ENCODE measurements at regions of chr17 and their contacts with region 1.

Region 1: GRCh38 chr17:75109407-75110233 is at the start of gene ARMC7:
- H3K4me3 ChIP-seq: peak within 1 kb of the TSS; percentile 75
- H3K27ac ChIP-seq: peak within 1 kb of the TSS; percentile 67; the same call in 1 of the 2 replicates
- H3K4me1 ChIP-seq: peaks cover 17% of the 10 kb centered on the region
- CTCF ChIP-seq: peak; percentile 10; the same call in 1 of the 2 replicates

Region 2: GRCh38 chr17:74917430-74917829 is 192.2 kb before region 1 on chr17:
- CTCF ChIA-PET with region 1: no interaction called
- POLR2A ChIA-PET with region 1: no interaction called
- H3K4me3 ChIP-seq: no peak overlapping the region
- H3K27ac ChIP-seq: no peak overlapping the region
- H3K4me1 ChIP-seq: no peaks in the 10 kb centered on the region
- CTCF ChIP-seq: no peak

Region 3: GRCh38 chr17:74961657-74962490 is 147.7 kb before region 1 on chr17:
- CTCF ChIA-PET with region 1: interaction called, 24 read pairs
- POLR2A ChIA-PET with region 1: interaction called, 3 read pairs
- H3K4me3 ChIP-seq: no peak overlapping the region
- H3K27ac ChIP-seq: no peak overlapping the region
- H3K4me1 ChIP-seq: no peaks in the 10 kb centered on the region
- CTCF ChIP-seq: peak; percentile 63

Region 4: GRCh38 chr17:75046582-75047289 is 62.9 kb before region 1 on chr17 and contains the starts of genes ATP5PD and KCTD2:
- CTCF ChIA-PET with region 1: interaction called, 15 read pairs
- POLR2A ChIA-PET with region 1: interaction called, 5 read pairs
- H3K4me3 ChIP-seq: peak within 1 kb of the TSS; percentile 99
- H3K27ac ChIP-seq: peak within 1 kb of the TSS; percentile 92
- H3K4me1 ChIP-seq: peaks cover 8% of the 10 kb centered on the region; the same call in 1 of the 2 replicates
- CTCF ChIP-seq: 0 out of 2 replicates have a peak, but pooled peaks have one; percentile 45

Region 5: GRCh38 chr17:75096082-75096625 is 13.5 kb before region 1 on chr17:
- CTCF ChIA-PET with region 1: interaction called, 61 read pairs
- POLR2A ChIA-PET with region 1: interaction called, 19 read pairs
- H3K4me3 ChIP-seq: no peak overlapping the region
- H3K27ac ChIP-seq: no peak overlapping the region
- H3K4me1 ChIP-seq: peaks cover under 1% of the 10 kb centered on the region; the same call in 1 of the 2 replicates
- CTCF ChIP-seq: no peak

Region 6: DNA sequence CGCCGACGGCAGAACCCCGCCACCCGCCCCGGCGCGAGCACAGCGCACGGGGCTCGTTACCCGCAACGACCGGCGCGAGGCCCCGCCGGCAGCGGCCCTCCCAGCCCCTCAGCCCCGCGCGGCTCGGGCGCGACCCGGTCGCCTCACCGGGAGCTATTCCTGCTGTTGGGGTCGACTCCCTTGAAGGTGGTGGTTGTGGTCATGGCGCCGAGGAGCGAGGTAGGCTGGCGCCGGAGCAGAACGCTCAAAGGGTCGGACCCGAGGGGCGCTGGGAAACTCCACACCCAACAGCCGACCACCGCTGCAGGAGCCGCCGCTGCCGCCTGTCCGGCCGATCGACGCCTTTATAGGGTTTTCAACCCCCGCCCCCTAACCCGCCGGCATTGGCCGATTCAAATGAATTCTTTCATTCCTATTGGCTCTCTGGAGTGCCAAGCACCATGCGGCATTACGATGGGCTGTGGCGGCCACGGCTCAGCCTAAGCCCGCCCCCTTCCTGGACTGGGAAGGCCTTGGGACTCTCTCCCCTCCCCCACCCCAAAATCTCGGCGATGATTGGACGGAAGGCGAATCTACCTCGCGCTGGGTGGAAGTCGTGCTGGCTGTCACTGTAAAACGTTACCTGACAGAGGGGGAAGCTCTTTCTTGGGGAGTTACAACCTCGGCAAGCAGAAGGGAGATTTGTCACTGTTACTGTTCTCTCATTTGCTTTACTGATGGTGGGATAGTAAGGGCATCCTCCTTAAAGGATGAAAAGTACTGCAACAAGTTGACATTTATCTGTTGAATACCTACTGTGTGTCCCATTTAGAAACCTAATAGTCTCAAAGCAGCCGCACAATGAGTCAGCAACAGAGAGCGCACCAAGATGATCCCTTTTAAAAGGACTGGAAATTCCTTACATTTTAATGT is 44.8 kb after region 1 on chr17 and contains the start of gene JPT1:
- CTCF ChIA-PET with region 1: interaction called, 11 read pairs
- POLR2A ChIA-PET with region 1: interaction called, 7 read pairs
- H3K4me3 ChIP-seq: peak within 1 kb of the TSS; percentile 90
- H3K27ac ChIP-seq: peak within 1 kb of the TSS; percentile 92
- H3K4me1 ChIP-seq: peaks cover 9% of the 10 kb centered on the region; the same call in 1 of the 2 replicates
- CTCF ChIP-seq: peak; percentile 11; the same call in 1 of the 2 replicates

Region 7: GRCh38 chr17:75205037-75205792 is 95.6 kb after region 1 on chr17 and contains the start of gene NUP85:
- CTCF ChIA-PET with region 1: interaction called, 149 read pairs
- POLR2A ChIA-PET with region 1: interaction called, 12 read pairs
- H3K4me3 ChIP-seq: peak within 1 kb of the TSS; percentile 98
- H3K27ac ChIP-seq: peak within 1 kb of the TSS; percentile 99
- H3K4me1 ChIP-seq: no peaks in the 10 kb centered on the region
- CTCF ChIP-seq: peak; percentile 96

Region 8: DNA sequence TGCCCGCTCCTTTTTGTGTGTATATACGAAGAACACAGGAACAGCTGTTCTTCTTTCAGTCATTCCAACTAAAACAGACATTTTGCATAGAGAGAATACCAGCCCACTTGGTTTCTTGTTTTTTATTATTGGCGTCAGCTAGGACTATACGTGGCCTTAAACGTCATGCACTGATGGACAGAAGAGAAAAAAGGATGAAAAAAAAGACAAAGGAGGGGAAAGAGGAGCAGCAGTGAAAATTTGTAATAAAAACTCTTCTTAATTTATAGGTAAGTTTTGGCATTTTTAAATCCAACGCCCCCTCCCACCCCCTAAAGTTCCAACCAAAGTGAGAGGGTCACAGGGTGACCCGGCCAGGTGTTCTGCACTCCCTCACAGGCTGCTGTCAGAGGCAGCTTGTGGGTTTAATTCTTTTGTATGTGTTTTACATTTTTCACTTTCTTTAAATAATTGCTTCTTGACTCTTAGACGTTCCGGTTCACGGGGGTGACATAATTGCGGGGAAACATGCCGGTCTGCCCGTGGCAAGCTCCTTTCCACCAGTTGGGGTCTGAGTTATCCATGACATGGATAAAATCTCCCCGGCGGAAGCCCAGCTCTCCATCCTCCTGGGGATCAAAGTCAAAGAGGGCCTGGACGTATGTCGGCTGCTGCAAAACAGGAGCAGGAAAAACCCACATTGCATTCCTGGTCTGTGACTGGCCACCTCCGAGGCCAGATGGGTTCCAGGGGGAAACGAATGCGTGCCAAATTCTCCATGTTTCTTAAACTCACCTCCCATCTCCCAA is 210.5 kb after region 1 on chr17:
- CTCF ChIA-PET with region 1: no interaction called
- POLR2A ChIA-PET with region 1: no interaction called
- H3K4me3 ChIP-seq: no peak overlapping the region
- H3K27ac ChIP-seq: no peak overlapping the region
- H3K4me1 ChIP-seq: peaks cover 5% of the 10 kb centered on the region
- CTCF ChIP-seq: no peak

Measured in HEK293 (cell line).